ENCODE measurements at regions of chr9 and their contacts with region 1.

Region 1: GRCh38 chr9:214648-215493 is at the start of gene DOCK8:
- DNase-seq: peak; percentile 77
- H3K4me3 ChIP-seq: peak within 1 kb of the TSS; percentile 55 to 62 (median 60)
- H3K27ac ChIP-seq: peak within 1 kb of the TSS; percentile 25
- H3K4me1 ChIP-seq: peaks cover 3% of the 10 kb centered on the region
- H3K27me3 ChIP-seq: peaks cover 2% of the 10 kb centered on the region
- CTCF ChIP-seq: peak; percentile 26 to 54
- total RNA-seq, gene DOCK8: 4.0 to 5.0 TPM

Region 2: GRCh38 chr9:304519-305190 is 89.8 kb after region 1 on chr9:
- CTCF ChIA-PET with region 1: interaction called, 10 read pairs
- dilution Hi-C with region 1: no loop called
- in situ Hi-C with region 1: no loop called
- intact Hi-C with region 1: loop called (anchors 1 kb)
- DNase-seq: peak; percentile 82
- H3K4me3 ChIP-seq: peak overlapping the region; percentile 1 to 53 (median 33)
- H3K27ac ChIP-seq: peak overlapping the region; percentile 94
- H3K4me1 ChIP-seq: peaks cover 10% of the 10 kb centered on the region
- H3K27me3 ChIP-seq: no peaks in the 10 kb centered on the region
- CTCF ChIP-seq: no peak

Region 3: GRCh38 chr9:757246-757881 is 542.5 kb after region 1 on chr9:
- CTCF ChIA-PET with region 1: no interaction called
- dilution Hi-C with region 1: no loop called
- in situ Hi-C with region 1: no loop called
- intact Hi-C with region 1: no loop called
- DNase-seq: peak; percentile 51
- H3K4me3 ChIP-seq: no peak overlapping the region
- H3K27ac ChIP-seq: no peak overlapping the region
- H3K4me1 ChIP-seq: peaks cover 25% of the 10 kb centered on the region
- H3K27me3 ChIP-seq: no peaks in the 10 kb centered on the region
- CTCF ChIP-seq: peak; percentile 46 to 74

Region 4: DNA sequence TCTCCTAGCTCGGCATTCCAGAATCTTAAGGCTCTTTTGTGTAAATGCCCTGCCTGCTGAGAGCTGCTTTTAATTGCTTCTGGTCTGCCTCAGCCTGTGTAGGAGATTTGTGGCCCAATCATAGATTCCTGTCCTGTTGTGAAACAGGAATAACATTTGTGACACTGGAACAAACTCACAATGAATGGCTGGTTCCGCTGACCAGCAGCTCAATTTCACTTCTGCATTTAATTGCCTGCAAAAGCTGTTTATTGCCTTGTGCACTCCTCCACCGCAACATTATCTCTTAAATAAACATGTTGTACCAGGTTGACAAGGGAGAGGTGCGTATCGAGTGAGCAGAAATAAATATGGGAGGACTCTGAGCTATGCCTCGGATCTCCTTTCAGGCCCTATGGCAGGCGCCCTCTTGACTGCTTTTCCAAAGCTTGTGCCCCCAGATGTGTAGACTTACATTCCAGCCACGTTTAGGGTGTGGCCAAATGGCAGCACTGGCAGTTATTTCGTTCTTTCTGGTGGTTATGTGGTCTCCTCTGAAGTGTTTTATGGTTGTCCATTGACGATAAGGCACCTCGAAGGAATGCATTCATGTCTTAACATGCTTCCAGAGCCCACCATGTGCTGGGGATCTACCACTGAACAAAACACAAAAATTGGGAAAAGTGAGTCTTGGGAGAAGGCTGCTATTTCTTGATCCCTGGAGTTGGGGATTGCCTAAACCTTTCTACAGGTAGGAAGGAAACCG is 684.7 kb after region 1 on chr9:
- CTCF ChIA-PET with region 1: no interaction called
- dilution Hi-C with region 1: no loop called
- in situ Hi-C with region 1: no loop called
- intact Hi-C with region 1: no loop called
- DNase-seq: no peak
- H3K4me3 ChIP-seq: no peak overlapping the region
- H3K27ac ChIP-seq: no peak overlapping the region
- H3K4me1 ChIP-seq: no peaks in the 10 kb centered on the region
- H3K27me3 ChIP-seq: no peaks in the 10 kb centered on the region
- CTCF ChIP-seq: no peak